Heart right ventricle (tissue), 16 donors: ENCODE measurements at regions of chr3 and their contacts with region 1.

Region 1: DNA sequence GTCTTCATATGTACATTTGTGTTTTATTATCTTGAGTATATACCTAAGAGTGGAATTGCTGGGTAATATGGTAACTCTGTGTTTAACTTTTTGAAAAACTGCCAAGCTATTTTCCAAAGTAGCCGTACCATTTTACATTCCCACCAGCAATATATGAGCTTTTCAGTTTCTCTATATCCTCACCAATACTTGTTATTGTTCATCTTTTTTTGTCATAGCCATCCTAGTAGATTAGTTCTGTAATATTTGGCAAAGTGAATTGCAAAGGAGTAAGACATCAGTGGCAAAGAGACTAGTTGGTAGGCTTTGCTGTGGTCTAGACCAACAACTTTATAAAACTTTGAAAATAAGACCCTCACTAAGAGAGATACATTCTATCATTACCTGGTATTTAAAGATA is 21.4 kb downstream of the OXSR1 start:
- DNase-seq: no peak
- ATAC-seq: no peak
- H3K4me3 ChIP-seq: no peak overlapping the region
- H3K27ac ChIP-seq: no peak overlapping the region
- H3K4me1 ChIP-seq: peaks cover 0 to 19% (median 5%) of the 10 kb centered on the region in 9 donors
- H3K27me3 ChIP-seq: no peaks in the 10 kb centered on the region
- CTCF ChIP-seq: no peak

Region 2: DNA sequence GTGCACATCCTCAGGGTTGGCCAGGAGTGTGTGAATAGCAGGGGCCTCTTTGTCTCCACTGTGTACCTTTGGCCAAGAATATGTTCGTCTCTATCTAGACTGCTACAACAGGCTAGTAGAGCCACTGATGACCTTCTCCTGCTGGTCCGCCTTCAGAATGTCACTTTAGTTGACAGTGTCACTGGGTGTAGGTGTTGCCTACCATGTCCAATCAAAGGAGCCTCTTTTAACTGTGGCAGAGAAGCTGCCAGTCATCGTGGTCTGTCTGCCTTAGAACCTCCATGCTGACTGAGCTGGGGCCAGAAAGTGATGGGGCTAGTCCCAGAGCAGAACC is 18.7 kb after region 1 on chr3:
- intact Hi-C with region 1: loop called in 1 of 10 experiments (anchors 2 kb)
- DNase-seq: no peak
- ATAC-seq: peak in 6 of 8 donors; percentile 47 to 90 (median 70)
- H3K4me3 ChIP-seq: no peak overlapping the region
- H3K27ac ChIP-seq: no peak overlapping the region
- H3K4me1 ChIP-seq: peaks cover 0 to 34% (median 11%) of the 10 kb centered on the region in 9 donors
- H3K27me3 ChIP-seq: no peaks in the 10 kb centered on the region
- CTCF ChIP-seq: no peak